CD4-positive, alpha-beta T cell (primary cell): ENCODE measurements at regions of chr15 and their contacts with region 1.

Region 1: DNA sequence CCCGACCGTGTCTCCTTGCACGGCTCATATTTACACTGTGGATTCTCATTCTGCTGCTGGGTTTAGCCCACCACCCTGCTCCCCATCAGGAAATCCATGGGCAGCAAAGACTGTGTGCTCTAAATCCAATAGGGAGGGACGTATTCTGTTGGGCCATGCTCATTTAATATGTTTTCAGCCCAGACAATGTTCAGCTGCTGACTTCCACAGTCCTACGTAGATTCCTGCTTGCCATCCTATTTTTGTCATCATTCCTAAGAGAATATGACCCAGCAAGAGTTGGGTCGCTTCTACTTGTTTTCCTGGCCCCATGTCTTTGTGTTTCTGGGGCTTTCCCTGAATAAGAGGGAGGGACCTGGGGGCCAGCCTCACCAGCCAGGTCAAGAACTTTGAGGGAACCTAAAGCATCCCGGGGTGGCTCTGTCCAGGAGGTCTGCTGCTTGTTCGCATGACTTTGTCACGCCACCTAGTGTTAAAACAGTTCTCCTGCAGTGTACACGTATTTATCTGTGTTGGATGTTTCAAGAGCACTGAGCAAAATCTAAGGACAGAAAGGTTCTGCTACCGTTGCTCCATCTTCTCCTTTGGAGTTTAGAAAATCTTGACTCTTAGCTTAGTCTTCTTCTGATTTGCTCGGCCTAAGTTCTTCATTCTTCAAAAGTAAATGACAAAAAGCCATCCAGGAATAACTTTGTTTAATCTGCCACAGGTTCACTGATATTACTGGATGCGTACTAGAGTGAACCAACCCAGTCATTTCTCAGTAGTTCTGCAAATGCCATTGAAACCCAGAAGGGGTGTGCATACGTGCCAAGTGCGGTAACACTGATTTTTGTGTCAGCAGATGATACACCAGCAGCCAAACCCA is 79.8 kb upstream of the NR2E3 start:
- DNase-seq: peak in 4 of 14 experiments; percentile 14 to 54 (median 40)
- ATAC-seq: no peak
- H3K4me3 ChIP-seq: no peak overlapping the region
- H3K4me3 Mint-ChIP-seq: no peak overlapping the region
- H3K27ac ChIP-seq: no peak overlapping the region
- H3K27ac Mint-ChIP-seq: no peak overlapping the region
- H3K4me1 ChIP-seq: no peaks in the 10 kb centered on the region
- H3K4me1 Mint-ChIP-seq: no peaks in the 10 kb centered on the region
- H3K27me3 ChIP-seq: peaks cover 0 to 10% of the 10 kb centered on the region in 2 experiments
- H3K27me3 Mint-ChIP-seq: peaks cover 28% of the 10 kb centered on the region
- CTCF ChIP-seq: peak; percentile 72

Region 2: DNA sequence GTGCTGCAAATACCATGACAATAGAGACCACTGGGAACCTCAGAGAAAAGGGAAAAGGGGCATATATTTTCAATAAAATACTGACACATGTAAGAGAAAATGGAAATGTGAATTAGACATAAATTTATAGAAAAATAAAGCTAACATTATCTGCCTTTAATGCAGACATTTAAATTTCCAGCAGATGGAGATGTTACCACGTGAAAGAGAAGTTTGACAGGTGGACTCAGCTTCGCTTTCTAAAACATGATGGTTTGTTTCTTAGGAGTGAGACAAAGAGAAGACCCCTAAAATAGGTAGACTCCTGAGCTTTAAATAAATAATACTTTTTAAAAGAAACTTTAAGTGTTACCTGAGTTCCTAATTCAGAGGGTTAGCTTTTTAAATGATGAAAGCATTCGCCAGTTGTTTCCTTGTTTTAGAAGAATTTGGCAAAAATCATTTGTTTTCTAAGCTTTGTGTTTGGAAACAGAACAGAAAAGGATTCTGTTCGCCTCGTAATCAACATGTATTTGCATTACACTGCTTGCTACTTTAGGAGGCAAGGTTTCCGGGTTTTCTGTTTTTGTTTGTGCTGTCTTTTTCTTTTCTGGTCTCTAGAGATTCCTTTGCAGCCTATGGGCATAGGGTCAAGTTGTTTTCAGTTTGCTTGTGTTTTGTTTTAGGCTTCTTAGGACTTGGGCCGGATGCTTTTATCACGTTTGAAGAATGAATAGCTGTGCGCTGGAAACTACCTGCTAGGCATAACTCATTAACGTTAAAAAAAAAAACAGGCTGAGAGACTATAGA is 343.9 kb before region 1 on chr15:
- CTCF ChIA-PET with region 1: no interaction called
- POLR2A ChIA-PET with region 1: no interaction called
- intact Hi-C with region 1: loop called in 1 of 2 experiments (anchors 5 kb)
- DNase-seq: peak in 3 of 14 experiments; percentile 15 to 35 (median 33)
- ATAC-seq: no peak
- H3K4me3 ChIP-seq: no peak overlapping the region
- H3K4me3 Mint-ChIP-seq: no peak overlapping the region
- H3K27ac ChIP-seq: no peak overlapping the region
- H3K27ac Mint-ChIP-seq: no peak overlapping the region
- H3K4me1 ChIP-seq: no peaks in the 10 kb centered on the region
- H3K4me1 Mint-ChIP-seq: peaks cover 11% of the 10 kb centered on the region
- H3K27me3 ChIP-seq: peaks cover 0 to 5% of the 10 kb centered on the region in 2 experiments
- H3K27me3 Mint-ChIP-seq: peaks cover 28% of the 10 kb centered on the region
- CTCF ChIP-seq: peak; percentile 19

Region 3: DNA sequence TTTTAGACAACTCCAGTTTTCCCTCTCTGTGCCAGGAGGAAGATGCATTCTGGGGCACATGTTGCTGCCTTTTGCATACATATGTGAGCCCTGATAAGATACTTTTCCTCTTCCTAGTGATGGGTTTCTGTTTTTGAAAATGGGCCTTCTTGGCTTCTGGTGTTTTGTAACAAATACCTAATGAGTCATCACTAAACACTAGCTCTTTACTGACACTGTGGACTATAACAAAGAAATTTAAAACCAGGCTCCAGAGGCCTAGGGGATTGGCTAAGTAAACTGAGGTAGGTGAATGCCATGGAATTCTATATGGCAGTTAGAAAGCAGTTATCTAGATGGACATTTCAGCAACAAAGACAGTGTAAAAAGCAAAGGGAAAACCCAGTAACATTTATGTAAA is 13.5 kb before region 1 on chr15:
- CTCF ChIA-PET with region 1: no interaction called
- POLR2A ChIA-PET with region 1: no interaction called
- intact Hi-C with region 1: no loop called
- DNase-seq: no peak
- ATAC-seq: no peak
- H3K4me3 ChIP-seq: no peak overlapping the region
- H3K4me3 Mint-ChIP-seq: no peak overlapping the region
- H3K27ac ChIP-seq: no peak overlapping the region
- H3K27ac Mint-ChIP-seq: no peak overlapping the region
- H3K4me1 ChIP-seq: no peaks in the 10 kb centered on the region
- H3K4me1 Mint-ChIP-seq: no peaks in the 10 kb centered on the region
- H3K27me3 ChIP-seq: no peaks in the 10 kb centered on the region
- H3K27me3 Mint-ChIP-seq: peaks cover 31% of the 10 kb centered on the region
- CTCF ChIP-seq: no peak